Activated CD8-positive, alpha-beta T cell treated with anti-CD3 and anti-CD28 coated beads for 36 hours (primary cell): ENCODE measurements at regions of chr5 and their contacts with region 1.

Region 1: GRCh38 chr5:137778772-137779564 is 24.8 kb upstream of the HNRNPA0 start:
- DNase-seq: no peak
- ATAC-seq: no peak
- H3K4me3 Mint-ChIP-seq: no peak overlapping the region
- H3K27ac Mint-ChIP-seq: no peak overlapping the region
- H3K4me1 Mint-ChIP-seq: no peaks in the 10 kb centered on the region
- H3K27me3 Mint-ChIP-seq: no peaks in the 10 kb centered on the region
- CTCF ChIP-seq: peak; percentile 82

Region 2: DNA sequence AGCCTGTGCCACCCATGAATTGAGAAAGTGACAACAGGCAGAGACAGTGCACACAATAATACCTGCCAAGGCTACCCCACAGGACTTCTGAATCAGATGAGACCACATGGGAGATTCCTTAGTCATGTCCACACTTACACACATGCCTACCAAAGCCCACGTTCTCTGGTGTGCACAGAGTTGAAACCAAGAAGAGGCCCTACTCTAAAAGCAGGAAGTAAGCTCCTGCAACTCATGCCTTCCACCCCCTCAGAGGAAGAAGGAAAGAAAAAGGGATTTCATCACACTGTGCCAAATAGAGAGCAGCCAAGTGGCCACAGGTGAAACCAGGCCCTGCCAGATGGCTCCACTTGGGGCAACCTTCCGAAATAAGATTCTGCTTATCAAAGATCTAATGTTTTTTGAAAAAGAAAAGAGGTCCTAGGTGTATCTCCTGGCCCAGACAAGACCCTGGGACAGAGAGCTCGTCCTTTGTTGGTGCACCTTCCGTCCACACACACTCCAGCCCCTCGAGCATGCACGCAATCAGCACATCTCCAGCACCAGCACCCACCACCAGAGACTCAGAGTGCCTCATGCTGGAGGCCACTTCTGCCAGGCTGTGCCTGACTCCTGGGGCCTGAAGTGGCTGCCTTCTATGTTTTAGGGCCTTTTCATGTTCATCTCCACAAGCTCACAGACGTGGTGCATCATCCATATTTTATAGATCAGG is 165.3 kb before region 1 on chr5:
- CTCF ChIA-PET with region 1: no interaction called
- POLR2A ChIA-PET with region 1: no interaction called
- intact Hi-C with region 1: no loop called
- DNase-seq: peak; percentile 28
- ATAC-seq: peak; percentile 81
- H3K4me3 Mint-ChIP-seq: no peak overlapping the region
- H3K27ac Mint-ChIP-seq: no peak overlapping the region
- H3K4me1 Mint-ChIP-seq: peaks cover 7% of the 10 kb centered on the region
- H3K27me3 Mint-ChIP-seq: no peaks in the 10 kb centered on the region
- CTCF ChIP-seq: no peak

Region 3: GRCh38 chr5:137734962-137735554 is 43.9 kb before region 1 on chr5:
- CTCF ChIA-PET with region 1: no interaction called
- POLR2A ChIA-PET with region 1: no interaction called
- intact Hi-C with region 1: no loop called
- DNase-seq: peak; percentile 44
- ATAC-seq: no peak
- H3K4me3 Mint-ChIP-seq: no peak overlapping the region
- H3K27ac Mint-ChIP-seq: no peak overlapping the region
- H3K4me1 Mint-ChIP-seq: peaks cover 55% of the 10 kb centered on the region
- H3K27me3 Mint-ChIP-seq: no peaks in the 10 kb centered on the region
- CTCF ChIP-seq: no peak

Region 4: GRCh38 chr5:137754126-137754960 is 24.6 kb before region 1 on chr5 and contains the start of gene HNRNPA0:
- CTCF ChIA-PET with region 1: interaction called, 22 read pairs
- POLR2A ChIA-PET with region 1: no interaction called
- intact Hi-C with region 1: no loop called
- DNase-seq: peak; percentile 97
- ATAC-seq: peak; percentile 88
- H3K4me3 Mint-ChIP-seq: peak within 1 kb of the TSS; percentile 88
- H3K27ac Mint-ChIP-seq: peak within 1 kb of the TSS; percentile 99
- H3K4me1 Mint-ChIP-seq: peaks cover 23% of the 10 kb centered on the region
- H3K27me3 Mint-ChIP-seq: no peaks in the 10 kb centered on the region
- CTCF ChIP-seq: no peak
- total RNA-seq, gene HNRNPA0: 32.8 to 33.1 TPM

Region 5: GRCh38 chr5:137808503-137809205 is 29.7 kb after region 1 on chr5:
- CTCF ChIA-PET with region 1: interaction called, 14 read pairs
- POLR2A ChIA-PET with region 1: no interaction called
- intact Hi-C with region 1: no loop called
- DNase-seq: no peak
- ATAC-seq: no peak
- H3K4me3 Mint-ChIP-seq: no peak overlapping the region
- H3K27ac Mint-ChIP-seq: no peak overlapping the region
- H3K4me1 Mint-ChIP-seq: no peaks in the 10 kb centered on the region
- H3K27me3 Mint-ChIP-seq: no peaks in the 10 kb centered on the region
- CTCF ChIP-seq: no peak

Region 6: DNA sequence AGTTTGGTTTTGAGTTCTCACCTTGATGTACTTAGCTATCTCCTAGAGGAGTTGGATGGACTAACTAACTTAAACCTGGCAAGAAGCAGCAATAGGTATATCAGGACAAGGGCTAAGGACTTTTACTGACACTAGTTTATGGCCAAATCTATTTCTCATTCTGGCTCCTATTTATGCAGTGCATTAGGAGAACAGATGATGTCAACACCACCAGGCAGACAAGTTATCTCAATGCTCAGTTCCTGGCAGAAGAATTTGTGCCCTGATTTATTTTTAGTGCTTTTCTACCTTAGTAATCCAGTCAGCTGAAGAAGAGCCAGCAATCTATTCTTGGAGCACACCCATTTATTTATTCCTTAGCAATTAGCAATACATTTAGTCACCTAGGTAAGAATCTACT is 58.0 kb after region 1 on chr5:
- CTCF ChIA-PET with region 1: interaction called, 10 read pairs
- POLR2A ChIA-PET with region 1: no interaction called
- intact Hi-C with region 1: no loop called
- DNase-seq: no peak
- ATAC-seq: no peak
- H3K4me3 Mint-ChIP-seq: no peak overlapping the region
- H3K27ac Mint-ChIP-seq: no peak overlapping the region
- H3K4me1 Mint-ChIP-seq: no peaks in the 10 kb centered on the region
- H3K27me3 Mint-ChIP-seq: no peaks in the 10 kb centered on the region
- CTCF ChIP-seq: no peak

Region 7: GRCh38 chr5:138024117-138024516 is 245.1 kb after region 1 on chr5:
- CTCF ChIA-PET with region 1: interaction called, 11 read pairs
- POLR2A ChIA-PET with region 1: no interaction called
- intact Hi-C with region 1: no loop called
- DNase-seq: no peak
- ATAC-seq: no peak
- H3K4me3 Mint-ChIP-seq: no peak overlapping the region
- H3K27ac Mint-ChIP-seq: peak overlapping the region; percentile 4
- H3K4me1 Mint-ChIP-seq: peaks cover 63% of the 10 kb centered on the region
- H3K27me3 Mint-ChIP-seq: no peaks in the 10 kb centered on the region
- CTCF ChIP-seq: no peak

Region 8: DNA sequence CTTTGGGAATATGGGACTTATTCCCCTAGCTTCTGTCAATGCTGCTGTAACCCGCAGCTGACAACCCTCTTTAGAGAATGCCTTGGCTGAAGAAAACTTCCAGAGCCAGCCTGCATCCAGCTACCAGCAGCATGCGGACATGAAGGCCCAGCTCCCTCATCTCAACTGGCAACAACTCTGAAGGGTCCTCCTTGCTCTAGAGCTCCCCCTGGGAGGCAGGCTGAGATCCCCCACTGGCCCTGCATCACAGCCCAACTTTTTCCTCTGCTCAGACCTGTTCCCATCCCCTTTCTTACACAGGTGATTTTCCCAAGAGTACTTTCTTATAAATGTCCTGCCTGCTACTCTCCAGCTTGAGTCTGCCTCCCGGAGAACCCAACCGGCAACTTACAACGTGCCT is 286.1 kb after region 1 on chr5:
- CTCF ChIA-PET with region 1: interaction called, 62 read pairs
- POLR2A ChIA-PET with region 1: no interaction called
- intact Hi-C with region 1: loop called (anchors 2 kb)
- DNase-seq: peak; percentile 26
- ATAC-seq: no peak
- H3K4me3 Mint-ChIP-seq: no peak overlapping the region
- H3K27ac Mint-ChIP-seq: no peak overlapping the region
- H3K4me1 Mint-ChIP-seq: no peaks in the 10 kb centered on the region
- H3K27me3 Mint-ChIP-seq: no peaks in the 10 kb centered on the region
- CTCF ChIP-seq: no peak